ENCODE measurements at regions of chr14 and their contacts with region 1.

Region 1: GRCh38 chr14:35438910-35439713 is 34.6 kb upstream of the NFKBIA start:
- DNase-seq: peak in 2 of 4 experiments; percentile 9 to 16
- ATAC-seq: peak; percentile 73
- H3K4me3 ChIP-seq: no peak overlapping the region
- H3K27ac ChIP-seq: no peak overlapping the region
- H3K4me1 ChIP-seq: peaks cover 0 to 3% of the 10 kb centered on the region in 2 experiments; a peak in 1 of 5 replicates
- H3K27me3 ChIP-seq: no peaks in the 10 kb centered on the region
- CTCF ChIP-seq: peak; percentile 41 to 59 (median 56); a peak in 4 of 6 replicates
- EP300 ChIP-seq: no peak
- POLR2A ChIP-seq: no peak
- RAD21 ChIP-seq: no peak

Region 2: DNA sequence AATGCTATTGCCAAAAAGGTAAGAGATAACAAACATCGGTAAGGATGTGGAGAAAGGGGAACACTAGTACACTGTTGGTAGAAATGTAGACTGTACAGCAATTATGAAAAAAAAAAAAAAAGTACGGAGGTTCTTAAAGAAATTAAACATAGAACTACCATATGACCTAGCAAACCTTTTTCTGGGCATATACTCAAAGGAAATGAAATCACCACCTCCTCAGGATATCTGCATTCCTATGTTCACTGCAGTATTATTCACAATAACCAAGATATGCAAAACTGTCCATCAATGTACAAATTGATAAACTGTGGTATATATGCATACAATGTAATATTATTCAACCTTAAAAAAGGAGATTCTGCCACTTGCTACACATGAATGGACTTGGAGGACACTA is 155.5 kb after region 1 on chr14:
- CTCF ChIA-PET with region 1: no interaction called
- POLR2A ChIA-PET with region 1: no interaction called
- in situ Hi-C with region 1: no loop called
- intact Hi-C with region 1: no loop called
- DNase-seq: no peak
- ATAC-seq: no peak
- H3K4me3 ChIP-seq: no peak overlapping the region
- H3K27ac ChIP-seq: no peak overlapping the region
- H3K4me1 ChIP-seq: no peaks in the 10 kb centered on the region
- H3K27me3 ChIP-seq: no peaks in the 10 kb centered on the region
- CTCF ChIP-seq: no peak
- EP300 ChIP-seq: no peak
- POLR2A ChIP-seq: no peak
- RAD21 ChIP-seq: no peak

Region 3: DNA sequence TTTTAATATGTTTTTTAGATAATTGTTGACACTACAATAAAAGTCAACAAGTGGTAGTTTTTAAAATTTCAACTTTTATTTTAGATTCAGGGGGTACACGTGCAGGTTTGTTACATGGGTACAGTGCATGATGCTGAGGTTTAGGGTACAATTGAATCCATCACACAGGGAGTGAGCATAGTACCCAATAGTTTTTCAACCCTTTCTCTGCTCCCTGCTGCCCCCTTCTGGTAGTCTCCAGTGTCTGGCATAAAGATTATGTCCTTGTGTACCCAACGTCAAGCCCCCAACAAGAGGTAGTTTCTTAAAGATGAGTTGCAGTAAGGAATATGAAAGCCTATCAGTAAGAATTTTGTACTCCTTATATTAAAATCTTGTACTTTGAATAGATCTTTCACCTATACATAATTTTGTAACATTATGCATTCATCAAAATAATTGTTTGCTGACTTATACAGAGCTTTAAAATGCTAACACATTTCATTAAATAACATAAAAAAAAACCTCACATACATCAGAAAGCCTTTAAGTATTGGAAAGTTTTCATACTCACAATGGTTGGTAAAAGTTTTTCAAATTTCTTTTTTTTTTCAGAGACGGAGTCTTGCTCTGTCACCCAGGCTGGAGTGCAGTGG is 375.4 kb after region 1 on chr14:
- CTCF ChIA-PET with region 1: no interaction called
- POLR2A ChIA-PET with region 1: no interaction called
- in situ Hi-C with region 1: loop called (anchors 10 kb)
- intact Hi-C with region 1: no loop called
- DNase-seq: peak; percentile 24 to 70 (median 28)
- ATAC-seq: peak; percentile 85
- H3K4me3 ChIP-seq: no peak overlapping the region
- H3K27ac ChIP-seq: no peak overlapping the region
- H3K4me1 ChIP-seq: no peaks in the 10 kb centered on the region; a peak in 1 of 5 replicates
- H3K27me3 ChIP-seq: no peaks in the 10 kb centered on the region
- CTCF ChIP-seq: peak; percentile 53 to 62 (median 54)
- EP300 ChIP-seq: no peak
- POLR2A ChIP-seq: no peak
- RAD21 ChIP-seq: peak in 1 of 2 experiments; percentile 24; a peak in 1 of 4 replicates

Measured in K562 (cell line).